ENCODE measurements at regions of chr9 and their contacts with region 1.

Region 1: DNA sequence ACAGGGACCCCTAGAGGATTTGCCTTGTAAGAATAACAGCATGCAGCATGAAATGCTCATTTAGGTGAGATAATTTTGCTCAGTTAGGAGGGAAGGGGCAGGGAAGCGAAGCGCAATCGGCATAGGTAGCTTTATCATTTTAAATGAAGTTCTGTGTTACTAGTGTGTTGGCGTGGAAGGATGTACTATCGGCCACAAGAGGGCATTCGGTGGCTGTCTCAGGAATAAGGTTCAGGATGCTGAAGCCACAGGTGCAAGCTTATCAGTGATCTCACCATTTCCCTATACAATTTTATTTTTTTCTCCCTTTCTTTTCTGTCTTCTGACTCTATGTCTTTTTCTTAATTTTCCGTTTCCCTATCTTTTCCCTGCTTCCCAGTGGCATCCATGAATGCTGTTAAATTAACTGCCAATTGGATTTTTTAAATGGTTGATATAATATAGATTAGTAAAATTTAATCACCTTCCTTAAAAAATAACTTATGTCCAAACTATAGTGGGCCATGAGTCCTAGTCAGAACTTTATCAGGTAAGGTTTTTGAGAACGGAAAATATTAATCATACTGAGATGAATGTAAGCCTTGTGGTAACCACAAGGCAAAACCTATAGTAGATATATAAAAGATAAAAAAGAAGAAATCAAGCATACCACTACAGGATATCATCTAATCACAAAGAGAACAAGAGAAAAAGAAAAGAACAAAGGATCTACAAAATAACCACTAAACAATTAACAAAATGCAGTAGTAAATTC is 1.2 kb upstream of the INSL6 start:
- DNase-seq: peak; percentile 56
- ATAC-seq: peak; percentile 94
- H3K4me3 ChIP-seq: no peak overlapping the region
- H3K27ac ChIP-seq: no peak overlapping the region
- H3K4me1 ChIP-seq: no peaks in the 10 kb centered on the region
- H3K27me3 ChIP-seq: peaks cover 0 to 5% of the 10 kb centered on the region in 2 experiments; a peak in 2 of 5 replicates
- CTCF ChIP-seq: peak; percentile 83
- EP300 ChIP-seq: no peak
- POLR2A ChIP-seq: no peak
- RAD21 ChIP-seq: peak; percentile 67

Region 2: GRCh38 chr9:5002811-5003210 is 183.8 kb before region 1 on chr9:
- CTCF ChIA-PET with region 1: no interaction called
- POLR2A ChIA-PET with region 1: no interaction called
- in situ Hi-C with region 1: no loop called
- intact Hi-C with region 1: no loop called
- DNase-seq: no peak
- ATAC-seq: no peak
- H3K4me3 ChIP-seq: no peak overlapping the region
- H3K27ac ChIP-seq: no peak overlapping the region
- H3K4me1 ChIP-seq: no peaks in the 10 kb centered on the region
- H3K27me3 ChIP-seq: no peaks in the 10 kb centered on the region
- CTCF ChIP-seq: no peak
- EP300 ChIP-seq: no peak
- POLR2A ChIP-seq: no peak
- RAD21 ChIP-seq: no peak

Region 3: DNA sequence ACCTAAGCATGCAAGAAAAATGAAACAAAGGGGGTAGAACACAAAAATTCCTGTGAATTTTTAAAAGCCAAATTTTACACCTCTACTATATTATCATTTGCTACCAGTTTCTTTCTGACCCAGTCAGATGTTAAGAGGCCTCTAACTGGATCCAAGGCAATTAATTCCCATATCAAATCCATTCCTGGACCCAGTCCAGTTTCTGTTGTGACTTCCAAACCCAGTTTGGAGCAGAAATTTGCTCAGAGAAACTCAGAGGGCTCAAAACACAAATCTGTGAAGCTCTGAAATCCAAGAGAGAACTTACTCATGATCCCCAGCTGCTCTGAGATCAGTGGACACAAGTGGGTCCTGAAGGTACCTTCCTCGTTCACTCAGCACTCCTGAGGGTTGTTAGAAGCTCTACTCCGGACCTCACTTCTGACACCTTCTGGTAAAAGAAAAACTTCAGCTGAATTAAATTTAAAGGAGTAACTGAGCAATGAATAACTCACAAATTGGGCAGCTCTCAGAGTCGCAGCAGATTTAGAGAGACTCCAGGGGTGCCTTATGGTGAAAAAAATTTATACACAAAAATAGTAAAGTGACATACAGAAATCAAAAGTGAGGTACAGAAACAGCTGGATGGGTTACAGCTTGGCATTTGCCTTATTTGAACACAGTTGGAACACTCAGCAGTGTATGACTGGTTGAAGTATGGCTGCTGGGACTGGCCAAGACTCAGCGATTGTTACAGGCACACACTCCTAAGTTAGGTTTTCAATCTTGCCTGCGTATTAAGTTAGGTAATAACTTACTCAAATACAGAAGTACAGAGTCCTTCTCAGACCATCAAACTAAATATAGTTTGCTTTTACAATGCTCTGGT is 77.0 kb after region 1 on chr9:
- CTCF ChIA-PET with region 1: no interaction called
- POLR2A ChIA-PET with region 1: no interaction called
- in situ Hi-C with region 1: no loop called
- intact Hi-C with region 1: loop called (anchors 5 kb)
- DNase-seq: peak; percentile 15
- ATAC-seq: peak; percentile 78
- H3K4me3 ChIP-seq: no peak overlapping the region
- H3K27ac ChIP-seq: no peak overlapping the region
- H3K4me1 ChIP-seq: peaks cover 8% of the 10 kb centered on the region
- H3K27me3 ChIP-seq: no peaks in the 10 kb centered on the region
- CTCF ChIP-seq: peak; percentile 23; the same call in 1 of the 2 replicates
- EP300 ChIP-seq: no peak
- POLR2A ChIP-seq: no peak
- RAD21 ChIP-seq: no peak

Region 4: DNA sequence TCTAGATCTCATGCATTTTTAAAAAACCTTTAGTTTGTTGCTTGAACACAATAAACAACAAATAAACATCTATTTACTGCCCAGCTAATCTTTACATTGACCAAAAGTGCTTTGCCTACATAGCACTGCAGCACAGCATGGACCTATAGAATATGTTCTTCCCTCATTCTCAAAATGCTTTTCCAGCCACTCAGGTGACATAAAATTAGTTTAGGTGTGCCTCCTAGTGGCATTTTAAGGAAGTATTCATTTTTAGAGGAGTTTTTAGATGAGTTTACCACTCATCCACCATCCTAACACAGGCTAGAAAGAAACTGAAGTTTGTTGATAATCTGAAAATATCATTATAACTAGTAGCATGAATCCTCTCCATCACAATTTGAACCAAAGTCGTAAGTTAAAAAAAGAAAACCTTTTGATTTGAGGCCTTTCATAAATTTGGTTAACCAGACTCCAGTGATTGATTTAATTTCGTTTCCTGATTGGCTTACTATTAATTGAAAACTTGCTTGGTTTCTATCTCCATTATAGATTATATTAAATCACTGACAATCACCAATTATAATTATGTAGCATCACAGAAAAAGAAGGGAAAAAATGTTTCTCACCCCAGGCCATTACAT is 238.5 kb after region 1 on chr9:
- CTCF ChIA-PET with region 1: interaction called, 16 read pairs
- POLR2A ChIA-PET with region 1: no interaction called
- in situ Hi-C with region 1: no loop called
- intact Hi-C with region 1: loop called (anchors 1 kb)
- DNase-seq: peak; percentile 20
- ATAC-seq: peak; percentile 67
- H3K4me3 ChIP-seq: no peak overlapping the region
- H3K27ac ChIP-seq: no peak overlapping the region
- H3K4me1 ChIP-seq: peaks cover 8% of the 10 kb centered on the region; the same call in 1 of the 2 replicates
- H3K27me3 ChIP-seq: no peaks in the 10 kb centered on the region
- CTCF ChIP-seq: peak; percentile 60
- EP300 ChIP-seq: no peak
- POLR2A ChIP-seq: no peak
- RAD21 ChIP-seq: no peak

Region 5: GRCh38 chr9:5437254-5438216 is 250.9 kb after region 1 on chr9 and contains the start of gene PLGRKT:
- CTCF ChIA-PET with region 1: interaction called, 4 read pairs
- POLR2A ChIA-PET with region 1: no interaction called
- in situ Hi-C with region 1: loop called (anchors 5 kb)
- intact Hi-C with region 1: loop called (anchors 1 kb)
- DNase-seq: peak; percentile 93
- ATAC-seq: peak; percentile 99
- H3K4me3 ChIP-seq: peak within 1 kb of the TSS; percentile 72 to 81 (median 78)
- H3K27ac ChIP-seq: peak within 1 kb of the TSS; percentile 86
- H3K4me1 ChIP-seq: peaks cover 29% of the 10 kb centered on the region
- H3K27me3 ChIP-seq: no peaks in the 10 kb centered on the region; a peak in 1 of 5 replicates
- CTCF ChIP-seq: peak; percentile 68
- EP300 ChIP-seq: 0 out of 4 replicates have a peak, but pooled peaks of 1 of the 2 experiments have one; percentile 14
- POLR2A ChIP-seq: peak; percentile 87 to 88
- RAD21 ChIP-seq: 0 out of 2 replicates have a peak, but pooled peaks have one; percentile 39
- total RNA-seq, gene PLGRKT: 15.8 and 20.2 TPM in 2 replicates

Region 6: GRCh38 chr9:5593904-5594303 is 407.3 kb after region 1 on chr9:
- CTCF ChIA-PET with region 1: interaction called, 11 read pairs
- POLR2A ChIA-PET with region 1: no interaction called
- in situ Hi-C with region 1: loop called (anchors 5 kb)
- intact Hi-C with region 1: no loop called
- DNase-seq: no peak
- ATAC-seq: no peak
- H3K4me3 ChIP-seq: no peak overlapping the region
- H3K27ac ChIP-seq: no peak overlapping the region
- H3K4me1 ChIP-seq: no peaks in the 10 kb centered on the region
- H3K27me3 ChIP-seq: no peaks in the 10 kb centered on the region
- CTCF ChIP-seq: no peak
- EP300 ChIP-seq: no peak
- POLR2A ChIP-seq: no peak
- RAD21 ChIP-seq: no peak

Measured in HepG2 (cell line).